Activated CD4-positive, alpha-beta memory T cell treated with anti-CD3 and anti-CD28 coated beads, Interleukin-2, amount 10 ng/mL, durations not matched to agents 7 days and 5 days (primary cell): ENCODE measurements at regions of chr1 and their contacts with region 1.

Region 1: DNA sequence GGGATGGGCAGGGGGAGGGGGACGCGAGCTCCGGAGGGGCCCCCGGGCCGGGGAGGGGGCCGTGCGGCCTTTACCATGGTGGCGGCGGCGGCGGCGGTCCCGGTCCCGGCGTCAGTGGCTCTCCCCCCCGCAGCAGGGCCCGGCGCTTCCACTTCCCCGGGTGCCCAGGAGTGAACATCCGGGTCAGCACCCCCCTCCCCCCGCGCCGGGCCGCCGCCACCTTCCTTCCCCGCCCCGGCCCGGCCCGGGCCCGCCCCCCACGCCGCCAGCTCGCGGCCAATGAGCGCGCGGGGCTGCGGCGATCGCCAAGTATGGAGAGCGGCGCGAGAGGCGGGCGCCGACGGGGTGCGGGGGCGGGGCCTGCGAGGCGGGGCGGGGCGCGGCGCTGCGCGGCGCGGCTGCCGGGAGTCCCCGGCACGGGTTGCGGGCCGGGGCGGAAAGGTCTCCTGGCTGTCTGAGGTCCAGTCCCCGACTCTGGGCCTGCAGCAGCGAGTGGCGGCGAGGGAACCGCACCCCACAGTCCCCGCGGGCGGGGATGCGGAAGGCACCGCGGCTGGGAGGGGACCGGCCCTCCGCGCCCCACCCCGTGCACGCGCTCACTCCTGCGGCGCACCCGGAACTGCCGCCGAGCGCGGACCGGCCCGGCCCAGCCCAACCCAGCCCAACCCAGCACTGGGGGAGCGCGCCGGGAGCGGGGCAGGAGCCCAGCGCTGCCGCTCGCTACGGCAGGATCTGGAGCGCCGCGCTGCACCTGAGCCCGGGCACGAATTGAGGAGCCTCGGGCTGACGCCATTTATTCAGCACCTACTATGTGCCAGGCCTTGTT is at the start of gene CAPZB:
- DNase-seq: peak; percentile 95
- H3K4me3 Mint-ChIP-seq: peak within 1 kb of the TSS; percentile 92
- H3K27ac Mint-ChIP-seq: peak within 1 kb of the TSS; percentile 93
- H3K4me1 Mint-ChIP-seq: peaks cover 56% of the 10 kb centered on the region
- H3K27me3 Mint-ChIP-seq: no peaks in the 10 kb centered on the region
- total RNA-seq, gene CAPZB: 537 to 565 TPM

Region 2: DNA sequence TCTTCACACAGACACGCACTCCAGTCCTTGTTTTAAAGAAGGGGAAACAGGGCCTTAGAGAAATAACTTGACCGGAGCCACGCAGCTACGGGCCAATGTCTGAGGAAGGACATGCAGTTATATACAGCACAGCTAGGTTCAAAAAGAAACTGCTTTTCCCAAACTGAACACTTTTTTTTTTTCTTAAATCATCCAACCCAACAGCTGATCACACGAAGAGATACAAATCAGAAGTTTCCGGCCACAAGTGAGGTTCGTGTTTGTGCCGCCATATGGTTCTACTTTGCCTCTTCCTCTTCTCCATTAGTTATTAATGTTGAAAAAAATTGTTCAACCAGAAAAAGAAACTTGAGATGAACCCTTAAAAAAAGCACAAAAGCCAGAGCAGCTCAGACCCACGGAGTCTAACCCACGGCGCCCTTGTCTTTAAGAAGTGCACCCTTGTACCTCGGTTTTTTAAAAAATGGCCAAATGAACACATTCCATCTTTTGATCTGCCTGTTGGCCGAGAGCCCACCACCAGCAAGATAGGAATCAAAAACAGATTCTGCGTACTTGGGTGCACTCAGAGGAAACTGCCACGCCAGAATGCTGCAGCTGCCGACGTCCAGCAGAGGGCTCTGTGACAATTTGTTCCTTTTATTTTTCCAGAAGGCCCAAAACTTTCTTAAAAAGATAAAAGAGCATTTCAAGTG is 94.5 kb before region 1 on chr1:
- CTCF ChIA-PET with region 1: interaction called, 6 read pairs
- POLR2A ChIA-PET with region 1: interaction called, 11 read pairs
- DNase-seq: peak; percentile 67
- H3K4me3 Mint-ChIP-seq: peak overlapping the region; percentile 64
- H3K27ac Mint-ChIP-seq: peak overlapping the region; percentile 93
- H3K4me1 Mint-ChIP-seq: peaks cover 71% of the 10 kb centered on the region
- H3K27me3 Mint-ChIP-seq: no peaks in the 10 kb centered on the region

Region 3: DNA sequence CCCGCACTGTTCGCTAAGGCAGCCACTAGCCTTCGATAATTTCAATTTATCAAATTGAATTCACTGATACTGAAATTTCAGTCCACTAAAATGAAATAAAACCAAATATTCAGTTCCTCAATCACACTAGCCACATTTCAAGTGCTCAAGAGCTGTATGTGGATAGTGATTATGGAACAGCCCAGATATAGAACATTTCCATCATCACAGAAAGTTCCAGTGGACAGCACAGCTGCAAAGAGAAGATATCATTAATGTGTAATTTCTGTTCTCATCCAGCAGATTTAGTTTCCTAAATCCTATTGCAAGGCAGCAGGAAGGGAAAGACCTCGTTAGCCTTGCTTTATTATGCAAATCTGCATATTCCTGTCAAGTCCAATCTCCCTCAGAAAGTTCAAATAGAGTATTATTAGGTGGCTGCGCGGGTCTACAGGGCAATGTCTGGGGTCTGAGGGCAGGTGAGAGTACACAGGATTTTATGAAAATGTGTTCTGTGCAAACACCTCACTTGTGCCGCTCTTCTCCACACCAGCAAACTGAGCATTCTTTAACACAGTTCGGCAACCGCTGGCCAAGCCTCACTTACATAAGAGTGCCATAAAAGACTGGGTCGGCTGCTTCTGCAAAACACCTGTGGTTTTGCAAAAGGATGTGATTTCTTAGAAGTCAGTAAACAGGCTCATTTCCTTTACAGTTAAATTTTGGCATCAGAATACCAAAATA is 22.6 kb before region 1 on chr1:
- CTCF ChIA-PET with region 1: interaction called, 14 read pairs
- POLR2A ChIA-PET with region 1: interaction called, 107 read pairs
- DNase-seq: peak; percentile 85
- H3K4me3 Mint-ChIP-seq: peak overlapping the region; percentile 67
- H3K27ac Mint-ChIP-seq: peak overlapping the region; percentile 83
- H3K4me1 Mint-ChIP-seq: peaks cover 87% of the 10 kb centered on the region
- H3K27me3 Mint-ChIP-seq: no peaks in the 10 kb centered on the region

Region 4: GRCh38 chr1:19468397-19468956 is 17.1 kb before region 1 on chr1:
- CTCF ChIA-PET with region 1: interaction called, 14 read pairs
- POLR2A ChIA-PET with region 1: interaction called, 107 read pairs
- DNase-seq: peak; percentile 79
- H3K4me3 Mint-ChIP-seq: peak overlapping the region; percentile 59
- H3K27ac Mint-ChIP-seq: peak overlapping the region; percentile 92
- H3K4me1 Mint-ChIP-seq: peaks cover 92% of the 10 kb centered on the region
- H3K27me3 Mint-ChIP-seq: no peaks in the 10 kb centered on the region

Region 5: DNA sequence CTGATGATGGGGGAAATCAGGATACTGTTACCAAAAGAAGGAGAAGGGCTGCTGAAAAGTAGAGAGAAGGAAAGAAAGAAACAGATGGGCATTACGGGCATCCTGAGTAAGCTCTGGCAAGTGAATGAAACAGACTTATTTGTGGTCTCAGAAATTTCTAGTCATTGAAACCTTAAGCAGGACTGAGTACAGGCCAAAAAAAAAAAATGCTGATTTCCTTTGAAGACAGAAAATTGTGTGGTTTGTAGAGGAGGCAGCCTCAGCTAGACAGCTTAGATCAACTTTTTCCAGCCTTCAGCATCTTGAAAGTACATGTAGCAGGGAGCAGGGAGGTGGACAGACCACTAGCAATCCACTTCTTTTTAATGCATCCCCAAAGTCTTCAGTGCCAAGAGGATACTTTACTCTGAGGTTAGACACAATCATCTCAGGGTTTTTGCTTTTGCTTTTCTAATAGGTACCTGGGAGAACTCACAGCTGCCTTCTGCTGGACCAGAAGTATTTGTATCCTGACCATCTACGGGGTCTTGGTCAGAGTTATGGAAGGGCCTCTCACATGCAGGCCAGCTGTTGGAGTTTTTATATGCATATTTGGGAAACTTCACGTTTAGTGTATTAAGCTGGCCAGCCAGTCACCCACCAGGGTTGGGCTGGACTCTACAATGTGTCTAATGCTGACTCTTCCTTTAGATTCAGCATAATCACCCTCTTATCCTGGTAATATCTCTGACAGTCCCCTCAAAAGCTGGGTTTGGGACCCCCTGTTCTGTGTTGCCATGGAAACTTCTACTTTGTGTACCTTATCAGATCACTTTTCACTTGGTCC is 10.4 kb after region 1 on chr1:
- CTCF ChIA-PET with region 1: interaction called, 9 read pairs
- POLR2A ChIA-PET with region 1: interaction called, 13 read pairs
- DNase-seq: no peak
- H3K4me3 Mint-ChIP-seq: no peak overlapping the region
- H3K27ac Mint-ChIP-seq: peak overlapping the region; percentile 16
- H3K4me1 Mint-ChIP-seq: peaks cover 36% of the 10 kb centered on the region
- H3K27me3 Mint-ChIP-seq: peaks cover 2% of the 10 kb centered on the region

Region 6: GRCh38 chr1:19517017-19517416 is 31.4 kb after region 1 on chr1:
- CTCF ChIA-PET with region 1: no interaction called
- POLR2A ChIA-PET with region 1: no interaction called
- DNase-seq: no peak
- H3K4me3 Mint-ChIP-seq: no peak overlapping the region
- H3K27ac Mint-ChIP-seq: no peak overlapping the region
- H3K4me1 Mint-ChIP-seq: no peaks in the 10 kb centered on the region
- H3K27me3 Mint-ChIP-seq: peaks cover 2% of the 10 kb centered on the region

Region 7: DNA sequence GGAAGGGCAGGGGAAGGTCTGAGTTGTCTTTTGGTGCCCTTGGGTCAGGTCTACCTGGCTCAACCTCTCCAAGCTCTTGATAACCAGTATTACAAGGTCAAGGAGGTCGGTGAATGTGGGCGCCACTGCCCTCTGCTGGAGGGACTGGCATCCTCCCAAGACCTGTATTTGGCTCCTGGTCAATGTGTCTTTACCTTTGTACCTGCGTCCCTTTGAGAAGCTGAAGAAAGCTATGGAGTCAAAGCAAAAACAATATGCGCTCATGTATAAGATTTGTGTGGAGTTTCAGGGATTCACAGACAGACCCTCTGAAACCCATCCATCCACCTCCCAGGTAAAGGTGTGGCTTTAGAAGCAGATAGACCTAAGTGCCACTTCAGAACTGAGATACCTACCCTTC is 96.7 kb after region 1 on chr1:
- CTCF ChIA-PET with region 1: interaction called, 14 read pairs
- POLR2A ChIA-PET with region 1: interaction called, 6 read pairs
- DNase-seq: peak; percentile 82
- H3K4me3 Mint-ChIP-seq: no peak overlapping the region
- H3K27ac Mint-ChIP-seq: no peak overlapping the region
- H3K4me1 Mint-ChIP-seq: peaks cover 14% of the 10 kb centered on the region
- H3K27me3 Mint-ChIP-seq: peaks cover 9% of the 10 kb centered on the region

Region 8: DNA sequence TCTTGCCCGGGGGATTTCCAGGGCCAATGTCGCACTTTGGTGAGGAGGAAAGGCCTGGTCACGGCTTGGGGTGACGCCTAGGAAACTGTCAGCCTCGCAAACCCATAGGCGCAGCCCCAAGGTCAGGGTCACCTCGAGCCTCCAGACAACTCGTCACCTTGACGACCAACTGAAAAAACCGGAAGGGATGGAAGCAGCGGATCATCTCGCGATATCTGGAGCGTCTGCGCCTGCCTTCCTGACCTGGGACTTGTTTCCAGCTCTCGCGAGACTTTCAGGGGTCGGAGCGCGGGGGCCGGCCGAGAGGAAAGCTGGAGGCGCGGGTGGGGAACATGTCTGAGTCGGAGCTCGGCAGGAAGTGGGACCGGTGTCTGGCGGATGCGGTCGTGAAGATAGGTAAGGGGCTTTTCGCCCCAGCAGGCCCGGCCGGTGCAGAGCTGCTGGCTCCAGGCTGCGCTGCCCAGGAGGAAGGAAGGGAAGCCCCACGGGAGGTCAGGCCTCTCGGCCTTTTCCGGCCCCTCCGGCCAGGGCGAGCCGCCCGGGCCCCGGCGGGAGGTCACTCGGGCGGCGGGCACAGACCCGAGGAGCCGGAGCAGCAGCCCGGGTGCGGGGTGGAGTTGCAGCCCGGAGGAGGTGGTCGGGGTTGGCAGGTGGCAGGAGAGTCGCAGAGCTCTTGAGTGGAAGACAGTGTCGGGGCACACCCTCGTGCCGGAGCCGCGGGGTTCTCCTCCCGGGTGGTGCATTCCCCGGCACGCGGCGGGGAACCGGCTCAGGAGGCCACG is 111.3 kb after region 1 on chr1:
- CTCF ChIA-PET with region 1: interaction called, 3 read pairs
- POLR2A ChIA-PET with region 1: interaction called, 23 read pairs
- DNase-seq: peak; percentile 97
- H3K4me3 Mint-ChIP-seq: peak overlapping the region; percentile 95
- H3K27ac Mint-ChIP-seq: peak overlapping the region; percentile 99
- H3K4me1 Mint-ChIP-seq: peaks cover 49% of the 10 kb centered on the region
- H3K27me3 Mint-ChIP-seq: no peaks in the 10 kb centered on the region

Region 9: DNA sequence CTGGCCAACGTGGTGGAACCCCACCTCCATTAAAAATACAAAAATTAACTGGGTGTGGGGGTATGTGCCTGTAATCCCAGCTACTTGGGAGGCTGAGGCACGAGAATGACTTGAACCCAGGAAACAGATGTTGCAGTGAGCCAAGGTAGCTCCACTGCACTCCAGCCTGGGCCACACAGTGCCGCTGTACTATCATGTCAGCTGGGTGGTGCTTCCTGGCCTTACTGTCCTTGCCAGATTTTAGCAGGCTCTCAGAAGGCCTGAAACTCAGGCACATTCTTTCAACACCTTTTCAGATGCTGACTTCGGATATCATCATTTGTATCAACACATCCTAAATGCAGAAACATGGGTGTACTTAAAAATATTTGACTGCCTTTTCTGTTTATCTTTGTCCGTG is 127.0 kb after region 1 on chr1:
- CTCF ChIA-PET with region 1: no interaction called
- POLR2A ChIA-PET with region 1: no interaction called
- DNase-seq: no peak
- H3K4me3 Mint-ChIP-seq: no peak overlapping the region
- H3K27ac Mint-ChIP-seq: no peak overlapping the region
- H3K4me1 Mint-ChIP-seq: peaks cover 14% of the 10 kb centered on the region
- H3K27me3 Mint-ChIP-seq: no peaks in the 10 kb centered on the region